GM23248 (cell line): ENCODE measurements at regions of chr15 and their contacts with region 1.

Region 1: GRCh38 chr15:90320061-90320884 is 31.8 kb upstream of the ZNF774 start:
- DNase-seq: peak; percentile 98
- H3K4me3 ChIP-seq: peak overlapping the region; percentile 33; the same call in 1 of the 2 replicates
- H3K27ac ChIP-seq: no peak overlapping the region
- H3K4me1 ChIP-seq: peaks cover 15% of the 10 kb centered on the region
- H3K27me3 ChIP-seq: no peaks in the 10 kb centered on the region

Region 2: DNA sequence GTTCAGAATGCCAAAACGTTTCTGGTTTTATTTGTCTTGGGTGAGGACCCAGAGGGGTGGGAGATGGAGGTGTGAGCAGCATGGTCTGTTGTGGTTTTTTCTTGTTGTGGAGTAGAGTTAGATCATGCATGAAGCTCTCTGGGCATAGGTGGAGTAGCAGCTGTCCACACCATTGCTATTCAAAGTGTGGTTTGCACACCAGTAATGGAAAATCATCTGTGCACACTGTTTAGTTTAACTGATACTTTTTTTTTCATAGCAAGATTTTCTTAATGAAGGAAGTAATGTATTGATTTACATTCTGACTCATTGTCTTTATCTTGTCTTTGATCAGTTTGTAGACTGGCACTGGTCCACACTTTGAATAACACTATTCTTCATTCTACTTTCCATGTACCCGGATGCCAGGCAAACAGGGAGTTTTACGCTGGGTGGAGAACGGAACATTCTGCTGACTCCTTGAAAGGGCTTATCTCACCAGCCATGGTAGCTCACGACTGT is 158.8 kb after region 1 on chr15:
- in situ Hi-C with region 1: loop called (anchors 10 kb)
- DNase-seq: no peak
- H3K4me3 ChIP-seq: no peak overlapping the region
- H3K27ac ChIP-seq: no peak overlapping the region
- H3K4me1 ChIP-seq: no peaks in the 10 kb centered on the region
- H3K27me3 ChIP-seq: no peaks in the 10 kb centered on the region

Region 3: DNA sequence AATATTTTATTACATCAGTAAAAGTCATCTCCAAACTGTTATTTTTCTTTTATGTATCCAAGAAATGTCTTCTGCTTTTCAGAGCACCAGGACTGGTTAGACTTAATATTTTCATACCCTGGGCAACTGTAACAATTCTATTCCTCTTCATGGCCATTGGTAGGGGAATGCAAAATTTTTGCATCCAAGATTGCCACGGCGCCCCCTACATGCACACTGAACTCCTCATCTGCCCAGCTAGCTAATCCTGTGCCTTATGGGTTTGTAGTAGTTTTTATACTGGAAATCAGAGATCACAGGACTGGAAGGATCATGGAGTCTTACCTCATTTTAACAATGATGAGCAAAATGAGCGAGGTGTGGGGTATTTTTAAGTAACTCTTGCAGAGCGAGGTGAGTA is 283.6 kb after region 1 on chr15:
- in situ Hi-C with region 1: loop called (anchors 25 kb)
- DNase-seq: peak; percentile 59
- H3K4me3 ChIP-seq: no peak overlapping the region
- H3K27ac ChIP-seq: no peak overlapping the region
- H3K4me1 ChIP-seq: no peaks in the 10 kb centered on the region
- H3K27me3 ChIP-seq: no peaks in the 10 kb centered on the region

Region 4: GRCh38 chr15:90638201-90638691 is 318.0 kb after region 1 on chr15:
- in situ Hi-C with region 1: no loop called
- DNase-seq: no peak
- H3K4me3 ChIP-seq: no peak overlapping the region
- H3K27ac ChIP-seq: no peak overlapping the region
- H3K4me1 ChIP-seq: no peaks in the 10 kb centered on the region
- H3K27me3 ChIP-seq: no peaks in the 10 kb centered on the region

Region 5: DNA sequence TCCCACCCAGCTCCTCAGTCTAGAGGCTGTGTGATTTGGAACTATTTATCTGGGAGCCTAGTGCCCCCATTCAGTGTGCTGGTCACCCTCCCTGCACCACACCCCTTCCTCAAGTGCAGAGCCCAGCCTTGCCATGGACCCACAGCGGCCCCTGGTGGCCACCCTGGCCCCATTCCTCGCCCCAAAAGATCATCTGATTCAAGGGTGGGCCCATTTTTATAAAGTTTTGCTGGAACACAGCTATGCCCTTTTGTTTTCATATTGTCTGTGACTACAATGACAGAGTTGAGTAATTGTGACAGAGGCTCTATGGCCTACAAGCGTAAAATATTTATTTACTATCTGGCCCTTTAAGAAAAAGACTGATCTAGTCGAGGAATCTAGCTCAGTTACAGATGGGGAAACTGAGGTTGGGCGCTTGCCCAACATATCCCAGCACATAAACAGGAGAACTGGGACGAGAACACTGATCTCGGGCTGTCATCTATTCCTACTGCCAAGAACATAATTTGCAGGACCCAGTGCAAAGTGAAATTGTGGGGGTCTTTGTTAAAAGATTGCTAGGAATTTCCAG is 565.9 kb after region 1 on chr15:
- in situ Hi-C with region 1: loop called (anchors 25 kb)
- DNase-seq: peak; percentile 68
- H3K4me3 ChIP-seq: no peak overlapping the region
- H3K27ac ChIP-seq: no peak overlapping the region
- H3K4me1 ChIP-seq: peaks cover 4% of the 10 kb centered on the region; the same call in 1 of the 2 replicates
- H3K27me3 ChIP-seq: no peaks in the 10 kb centered on the region